ENCODE measurements at regions of chr2 and their contacts with region 1.

Region 1: DNA sequence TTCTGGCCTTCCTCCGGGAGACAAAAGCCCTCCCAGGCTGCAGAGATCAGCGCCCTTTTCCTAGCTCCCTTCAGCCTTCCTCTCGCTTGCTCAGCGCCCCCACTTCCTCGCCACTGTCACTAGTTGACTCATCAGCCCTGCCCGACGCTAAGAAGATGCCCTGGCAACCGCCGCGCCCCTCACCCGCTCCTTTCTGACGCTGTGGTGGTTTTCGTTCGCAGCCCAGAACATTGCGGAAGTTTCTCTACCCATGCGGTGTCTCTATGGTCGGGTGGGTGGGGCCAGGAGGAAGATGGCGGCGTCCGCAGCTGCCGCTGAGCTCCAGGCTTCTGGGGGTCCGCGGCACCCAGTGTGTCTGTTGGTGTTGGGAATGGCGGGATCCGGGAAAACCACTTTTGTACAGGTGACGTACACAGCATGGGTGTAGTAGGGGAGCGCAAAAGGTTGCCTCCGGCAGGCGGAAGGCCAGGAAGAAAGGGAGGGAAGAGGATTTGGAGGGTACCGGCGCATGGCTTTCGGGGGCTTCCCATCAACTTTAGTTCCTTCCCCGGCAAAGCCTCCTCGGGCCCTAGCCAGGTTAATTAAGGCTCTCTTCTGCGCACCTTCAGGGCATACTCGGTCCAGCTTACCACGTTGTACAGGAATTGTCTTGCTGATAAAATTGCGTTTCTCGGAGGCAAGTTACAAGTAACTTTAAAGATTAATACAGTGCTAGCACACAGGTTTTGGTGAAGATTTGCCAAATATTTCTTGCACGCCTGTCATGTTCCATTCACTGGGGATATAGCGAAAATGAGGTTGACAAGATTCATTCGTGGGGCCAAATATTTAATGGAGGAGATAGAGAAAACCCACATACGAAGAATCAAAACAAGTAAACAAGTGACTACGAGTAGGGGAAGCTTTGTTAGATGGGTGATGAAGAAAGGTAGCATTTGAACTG is at the starts of genes CCDC121 and GPN1:
- DNase-seq: peak; percentile 89 to 97 (median 94)
- ATAC-seq: peak; percentile 99
- H3K4me3 ChIP-seq: peak within 1 kb of the TSS; percentile 86
- H3K4me3 Mint-ChIP-seq: no peak within 1 kb of the TSS
- H3K27ac ChIP-seq: peak within 1 kb of the TSS; percentile 72 to 78
- H3K27ac Mint-ChIP-seq: no peak within 1 kb of the TSS
- H3K4me1 ChIP-seq: peaks cover 21% of the 10 kb centered on the region
- H3K4me1 Mint-ChIP-seq: peaks cover 20% of the 10 kb centered on the region
- H3K27me3 ChIP-seq: no peaks in the 10 kb centered on the region
- H3K27me3 Mint-ChIP-seq: no peaks in the 10 kb centered on the region
- CTCF ChIP-seq: no peak
- total RNA-seq, gene CCDC121: 0.47 to 0.91 TPM
- total RNA-seq, gene GPN1: 24.6 to 28.1 TPM

Region 2: DNA sequence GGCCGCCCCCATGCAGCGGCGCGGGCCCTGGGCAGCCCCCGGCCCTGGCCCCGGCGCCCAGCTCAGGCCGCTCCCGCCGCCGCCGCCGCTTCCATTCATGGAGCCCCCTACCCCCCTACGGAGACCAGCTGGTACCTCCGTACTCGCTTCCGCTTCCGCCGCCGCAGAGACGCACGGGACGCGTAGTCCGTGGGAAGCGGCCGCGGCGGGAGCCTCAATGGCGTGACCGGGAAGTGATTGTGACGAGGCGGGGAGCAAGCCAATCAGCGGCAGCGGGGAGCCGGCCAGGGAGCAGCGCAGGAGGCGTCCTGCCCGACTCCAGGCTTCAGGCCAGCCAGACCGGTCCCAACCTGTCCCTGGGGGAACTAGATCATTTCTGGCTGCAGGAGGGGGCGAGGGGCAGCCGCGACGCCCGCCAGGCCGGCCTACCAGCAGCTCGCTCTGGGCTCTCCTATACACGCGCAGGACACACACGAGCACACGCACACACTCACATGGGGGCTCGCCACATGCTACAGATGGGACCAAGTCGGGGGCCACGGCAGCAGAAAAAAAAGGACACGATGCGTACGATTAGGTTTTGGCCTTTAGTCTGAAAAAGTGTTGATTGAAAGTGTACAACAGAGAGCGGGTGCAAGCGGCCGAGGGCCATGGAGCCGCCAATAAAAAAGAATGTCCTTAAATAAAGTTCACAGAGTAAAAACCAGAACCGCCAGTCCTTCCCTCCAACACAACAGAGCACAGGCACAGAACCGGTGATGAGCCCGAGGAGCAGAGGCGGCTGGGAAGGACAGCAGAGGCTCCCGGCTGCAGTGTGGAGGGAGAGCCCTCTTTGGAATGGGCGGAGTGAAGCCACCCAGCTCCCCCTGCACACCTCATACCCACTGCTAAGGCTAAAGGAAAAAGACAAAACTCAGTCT is 248.2 kb before region 1 on chr2 and contains the start of gene ZNF513:
- CTCF ChIA-PET with region 1: no interaction called
- POLR2A ChIA-PET with region 1: interaction called, 7 read pairs
- intact Hi-C with region 1: loop called in 1 of 2 experiments (anchors 5 kb)
- DNase-seq: peak; percentile 75 to 94 (median 86)
- ATAC-seq: peak; percentile 92
- H3K4me3 ChIP-seq: peak within 1 kb of the TSS; percentile 66
- H3K4me3 Mint-ChIP-seq: peak within 1 kb of the TSS; percentile 93
- H3K27ac ChIP-seq: peak within 1 kb of the TSS; percentile 80 to 86
- H3K27ac Mint-ChIP-seq: peak within 1 kb of the TSS; percentile 91
- H3K4me1 ChIP-seq: peaks cover 18% of the 10 kb centered on the region
- H3K4me1 Mint-ChIP-seq: peaks cover 32% of the 10 kb centered on the region
- H3K27me3 ChIP-seq: no peaks in the 10 kb centered on the region
- H3K27me3 Mint-ChIP-seq: no peaks in the 10 kb centered on the region
- CTCF ChIP-seq: no peak
- total RNA-seq, gene ZNF513: 22.8 to 22.9 TPM

Region 3: DNA sequence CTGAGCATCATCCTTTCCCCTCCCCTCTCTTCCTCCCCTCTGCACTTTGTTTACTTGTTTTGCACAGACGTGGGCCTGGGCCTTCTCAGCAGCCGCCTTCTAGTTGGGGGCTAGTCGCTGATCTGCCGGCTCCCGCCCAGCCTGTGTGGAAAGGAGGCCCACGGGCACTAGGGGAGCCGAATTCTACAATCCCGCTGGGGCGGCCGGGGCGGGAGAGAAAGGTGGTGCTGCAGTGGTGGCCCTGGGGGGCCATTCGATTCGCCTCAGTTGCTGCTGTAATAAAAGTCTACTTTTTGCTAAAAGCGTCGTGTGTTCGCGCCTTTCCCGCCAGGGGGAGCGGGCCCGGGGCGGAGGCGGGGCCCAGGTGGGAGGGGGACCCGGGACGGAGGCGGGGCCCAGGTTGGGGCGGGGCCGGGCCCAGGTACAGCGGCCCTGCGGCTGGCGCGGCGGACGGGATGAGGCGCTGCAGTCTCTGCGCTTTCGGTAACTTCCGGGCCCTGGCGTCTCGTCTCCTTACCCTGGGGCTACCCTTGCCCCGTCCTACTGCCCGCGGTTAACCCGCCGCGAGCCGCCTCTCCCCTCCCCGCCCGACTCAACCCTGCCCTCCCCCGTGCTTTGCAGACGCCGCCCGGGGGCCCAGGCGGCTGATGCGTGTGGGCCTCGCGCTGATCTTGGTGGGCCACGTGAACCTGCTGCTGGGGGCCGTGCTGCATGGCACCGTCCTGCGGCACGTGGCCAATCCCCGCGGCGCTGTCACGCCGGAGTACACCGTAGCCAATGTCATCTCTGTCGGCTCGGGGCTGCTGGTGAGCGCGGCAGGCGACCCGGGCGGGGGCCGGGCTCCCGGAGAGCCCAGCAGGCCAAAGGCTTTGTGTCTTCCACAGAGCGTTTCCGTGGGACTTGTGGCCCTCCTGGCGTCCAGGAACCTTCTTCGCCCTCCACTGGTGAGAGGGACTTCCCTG is 186.8 kb before region 1 on chr2 and contains the start of gene KRTCAP3:
- CTCF ChIA-PET with region 1: no interaction called
- POLR2A ChIA-PET with region 1: no interaction called
- intact Hi-C with region 1: loop called in 1 of 2 experiments (anchors 5 kb)
- DNase-seq: peak; percentile 45 to 77 (median 60)
- ATAC-seq: peak; percentile 96
- H3K4me3 ChIP-seq: no peak within 1 kb of the TSS
- H3K4me3 Mint-ChIP-seq: peak within 1 kb of the TSS; percentile 5
- H3K27ac ChIP-seq: no peak within 1 kb of the TSS
- H3K27ac Mint-ChIP-seq: peak within 1 kb of the TSS; percentile 61
- H3K4me1 ChIP-seq: peaks cover 8% of the 10 kb centered on the region
- H3K4me1 Mint-ChIP-seq: peaks cover 20% of the 10 kb centered on the region
- H3K27me3 ChIP-seq: no peaks in the 10 kb centered on the region
- H3K27me3 Mint-ChIP-seq: no peaks in the 10 kb centered on the region
- CTCF ChIP-seq: peak; percentile 37
- total RNA-seq, gene KRTCAP3: 11.5 to 12.8 TPM

Region 4: DNA sequence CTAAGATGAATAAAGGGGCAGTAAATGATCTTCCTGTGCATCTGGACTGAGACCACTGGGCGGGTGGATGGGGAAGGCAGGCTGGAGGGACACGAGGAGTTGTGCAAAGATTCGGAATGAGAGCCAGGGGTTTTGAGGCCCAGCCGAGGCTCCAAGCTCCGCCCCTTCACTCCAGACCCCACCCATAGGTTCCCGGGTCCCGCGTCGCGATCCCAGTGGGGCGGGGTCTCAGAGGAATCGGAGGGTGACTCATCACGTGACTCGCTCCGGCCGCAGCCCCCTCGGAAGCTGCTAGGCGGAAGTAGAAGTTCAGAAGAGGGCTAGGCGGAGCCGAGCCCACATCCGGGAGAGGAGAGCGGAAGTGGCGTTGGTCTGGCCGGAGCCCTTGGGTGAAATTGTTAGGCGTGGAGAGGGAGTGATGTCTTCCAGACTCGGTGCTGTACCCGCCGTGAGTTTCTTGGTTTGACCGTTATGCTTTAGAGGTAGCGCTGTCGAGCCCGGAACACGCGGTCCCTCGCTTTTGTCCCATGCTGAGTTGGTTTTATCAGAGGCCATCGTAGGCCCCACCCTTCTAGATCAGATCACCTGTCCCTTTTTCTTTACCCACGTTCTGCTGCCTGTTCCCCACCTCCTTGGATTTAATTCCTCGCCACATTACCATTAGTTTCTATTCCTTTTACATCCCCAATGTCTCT is 46.2 kb before region 1 on chr2 and contains the start of gene ZNF512:
- CTCF ChIA-PET with region 1: no interaction called
- POLR2A ChIA-PET with region 1: interaction called, 5 read pairs
- intact Hi-C with region 1: loop called (anchors 2 to 5 kb)
- DNase-seq: peak; percentile 53 to 91 (median 70)
- ATAC-seq: peak; percentile 81
- H3K4me3 ChIP-seq: peak within 1 kb of the TSS; percentile 74
- H3K4me3 Mint-ChIP-seq: peak within 1 kb of the TSS; percentile 94
- H3K27ac ChIP-seq: peak within 1 kb of the TSS; percentile 56 to 80
- H3K27ac Mint-ChIP-seq: peak within 1 kb of the TSS; percentile 92
- H3K4me1 ChIP-seq: peaks cover 46% of the 10 kb centered on the region
- H3K4me1 Mint-ChIP-seq: peaks cover 54% of the 10 kb centered on the region
- H3K27me3 ChIP-seq: no peaks in the 10 kb centered on the region
- H3K27me3 Mint-ChIP-seq: no peaks in the 10 kb centered on the region
- CTCF ChIP-seq: no peak
- total RNA-seq, gene ZNF512: 13.6 to 14.1 TPM